Activated T-helper 2 cell treated with anti-CD3 and anti-CD28 coated beads, Interferon-gamma antibody, Interleukin-2, Interleukin-4, amounts not matched to agents 10 μg/mL and 5 μg/mL and 100 μg/mL, durations not matched to agents 14 hours and 24 hours and 36 hours (primary cell): ENCODE measurements at regions of chr10 and their contacts with region 1.

Region 1: GRCh38 chr10:91908337-91909116 is 759 bp downstream of the FGFBP3 start:
- DNase-seq: peak; percentile 69
- H3K4me3 Mint-ChIP-seq: peak overlapping the region; percentile 88
- H3K27ac Mint-ChIP-seq: peak overlapping the region; percentile 78
- H3K4me1 Mint-ChIP-seq: peaks cover 20% of the 10 kb centered on the region
- H3K27me3 Mint-ChIP-seq: peaks cover 12% of the 10 kb centered on the region

Region 2: GRCh38 chr10:91220194-91220953 is 688.2 kb before region 1 on chr10 and contains the start of gene PCGF5:
- intact Hi-C with region 1: loop called (anchors 10 kb)
- DNase-seq: peak; percentile 88
- H3K4me3 Mint-ChIP-seq: peak within 1 kb of the TSS; percentile 92
- H3K27ac Mint-ChIP-seq: peak within 1 kb of the TSS; percentile 86
- H3K4me1 Mint-ChIP-seq: peaks cover 38% of the 10 kb centered on the region
- H3K27me3 Mint-ChIP-seq: no peaks in the 10 kb centered on the region
- total RNA-seq, gene PCGF5: 35.9 and 36.9 TPM in 2 replicates

Region 3: GRCh38 chr10:91389636-91390512 is 518.7 kb before region 1 on chr10:
- intact Hi-C with region 1: loop called (anchors 1 kb)
- DNase-seq: no peak
- H3K4me3 Mint-ChIP-seq: no peak overlapping the region
- H3K27ac Mint-ChIP-seq: no peak overlapping the region
- H3K4me1 Mint-ChIP-seq: peaks cover 8% of the 10 kb centered on the region
- H3K27me3 Mint-ChIP-seq: peaks cover 33% of the 10 kb centered on the region

Region 4: GRCh38 chr10:91758303-91759146 is 150.0 kb before region 1 on chr10:
- intact Hi-C with region 1: loop called (anchors 1 kb)
- DNase-seq: no peak
- H3K4me3 Mint-ChIP-seq: no peak overlapping the region
- H3K27ac Mint-ChIP-seq: no peak overlapping the region
- H3K4me1 Mint-ChIP-seq: no peaks in the 10 kb centered on the region
- H3K27me3 Mint-ChIP-seq: peaks cover 49% of the 10 kb centered on the region

Region 5: DNA sequence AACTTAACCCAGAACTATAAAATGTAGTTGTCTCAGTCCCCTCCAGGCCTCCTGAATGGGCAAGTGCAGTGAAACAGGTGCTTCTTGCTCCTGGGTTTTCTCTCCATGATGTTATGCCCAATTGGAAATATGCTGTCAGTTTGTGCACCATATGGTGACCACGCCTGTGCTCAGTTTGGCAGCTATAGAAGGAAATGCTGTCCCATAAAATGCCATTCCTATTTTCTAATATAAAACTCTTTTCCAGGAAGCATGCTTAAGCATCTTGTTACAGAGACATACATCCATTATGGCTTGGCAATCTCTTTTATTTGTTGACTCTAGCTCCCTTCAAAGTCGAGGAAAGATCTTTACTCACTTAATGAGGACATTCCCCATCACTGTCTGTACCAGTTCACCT is 44.4 kb before region 1 on chr10:
- intact Hi-C with region 1: no loop called
- DNase-seq: no peak
- H3K4me3 Mint-ChIP-seq: no peak overlapping the region
- H3K27ac Mint-ChIP-seq: no peak overlapping the region
- H3K4me1 Mint-ChIP-seq: no peaks in the 10 kb centered on the region
- H3K27me3 Mint-ChIP-seq: no peaks in the 10 kb centered on the region

Region 6: GRCh38 chr10:91923371-91924211 is 15.1 kb after region 1 on chr10 and contains the start of gene BTAF1:
- intact Hi-C with region 1: loop called (anchors 1 kb)
- DNase-seq: peak; percentile 89
- H3K4me3 Mint-ChIP-seq: peak within 1 kb of the TSS; percentile 87
- H3K27ac Mint-ChIP-seq: peak within 1 kb of the TSS; percentile 100
- H3K4me1 Mint-ChIP-seq: peaks cover 29% of the 10 kb centered on the region
- H3K27me3 Mint-ChIP-seq: peaks cover 4% of the 10 kb centered on the region
- total RNA-seq, gene BTAF1: 66.0 and 68.2 TPM in 2 replicates